Activated T-helper 2 cell treated with anti-CD3 and anti-CD28 coated beads, Interferon-gamma antibody, Interleukin-2, Interleukin-4, amounts not matched to agents 10 μg/mL and 5 μg/mL and 100 μg/mL, durations not matched to agents 14 hours and 24 hours and 36 hours (primary cell): ENCODE measurements at regions of chr2 and their contacts with region 1.

Region 1: DNA sequence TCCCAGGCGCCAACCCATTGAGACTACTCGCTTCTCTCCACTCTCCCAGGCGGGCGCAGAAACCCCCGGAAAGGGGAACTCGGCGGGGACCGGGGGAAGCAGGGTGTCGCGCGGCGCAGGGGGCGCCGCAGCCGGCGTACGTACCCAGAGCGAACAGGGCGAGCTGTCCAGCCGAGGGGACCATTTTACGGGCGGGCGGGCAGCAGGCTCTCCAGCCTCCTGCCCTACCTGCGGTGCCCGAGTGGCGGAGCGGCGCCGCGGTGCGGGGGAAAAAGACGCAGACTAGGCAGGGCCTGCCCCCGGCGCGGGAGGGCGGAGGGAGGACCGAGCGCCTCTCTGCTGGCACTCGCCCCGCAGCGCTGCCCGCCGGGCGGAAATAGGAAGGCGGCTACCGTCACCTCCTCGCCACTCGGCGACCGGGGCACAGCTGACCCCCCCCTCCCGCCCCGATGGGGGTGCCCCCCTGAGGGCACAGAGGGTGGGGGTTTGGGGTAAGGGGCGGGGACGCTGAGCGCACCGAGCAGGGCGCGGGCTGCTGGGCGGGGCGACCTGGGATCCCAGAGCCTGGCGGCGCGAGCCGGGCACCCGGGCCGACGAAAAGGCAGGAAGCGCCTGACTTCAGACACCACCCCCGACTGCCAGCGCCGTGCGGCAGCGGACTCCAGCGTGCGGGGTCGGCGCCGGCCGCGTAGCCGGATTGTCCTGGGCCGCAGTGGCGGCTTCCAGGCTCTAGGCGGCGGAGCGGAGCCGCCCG is at the start of gene TGFA:
- DNase-seq: peak; percentile 54
- H3K4me3 Mint-ChIP-seq: peak within 1 kb of the TSS; percentile 73
- H3K27ac Mint-ChIP-seq: no peak within 1 kb of the TSS
- H3K4me1 Mint-ChIP-seq: peaks cover 17% of the 10 kb centered on the region
- H3K27me3 Mint-ChIP-seq: peaks cover 60% of the 10 kb centered on the region
- total RNA-seq, gene TGFA: not detected in 2 replicates

Region 2: DNA sequence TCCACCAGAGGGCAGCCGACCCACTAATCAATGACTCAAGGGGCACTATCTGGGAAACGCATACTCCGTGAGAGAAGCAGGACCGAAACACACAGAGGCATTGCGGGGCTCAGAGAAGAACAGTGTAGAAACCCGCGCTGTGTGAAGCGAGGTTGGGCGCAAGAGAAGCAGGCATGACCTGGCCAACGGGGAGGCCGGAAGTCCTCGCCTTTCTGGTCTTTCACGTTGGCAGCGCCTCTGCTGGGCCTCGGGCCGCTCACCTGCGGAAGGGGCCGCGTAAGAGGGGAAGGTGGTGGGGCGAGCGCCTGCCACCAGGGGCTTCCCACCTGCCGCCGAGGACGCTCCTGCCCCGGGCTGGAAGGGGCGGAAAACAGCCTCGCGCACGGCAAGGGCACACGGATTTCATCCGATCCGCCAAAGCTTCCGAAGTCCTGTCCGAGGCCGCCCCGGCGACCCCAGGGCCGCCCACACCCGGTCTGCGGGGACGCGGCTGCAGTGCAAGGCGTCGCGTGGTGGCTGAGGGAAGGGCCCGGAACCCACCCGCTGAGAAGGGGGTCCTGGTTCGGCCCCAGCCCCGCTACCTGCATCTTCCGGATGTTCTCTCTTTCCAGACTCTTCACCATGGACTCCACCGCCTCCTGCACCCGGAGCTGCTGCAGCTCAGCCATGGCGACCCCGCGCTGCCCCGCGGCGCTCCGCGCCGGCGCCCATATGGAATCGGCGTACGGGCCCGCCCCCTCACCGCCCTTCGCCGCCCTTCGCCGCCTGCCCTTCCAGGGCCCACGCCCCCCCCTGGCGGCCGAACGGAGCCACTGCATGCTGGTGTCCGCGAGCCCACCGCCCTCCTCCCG is 252.2 kb before region 1 on chr2 and contains the start of gene FAM136A:
- intact Hi-C with region 1: loop called (anchors 2 kb)
- DNase-seq: peak; percentile 86
- H3K4me3 Mint-ChIP-seq: peak within 1 kb of the TSS; percentile 88
- H3K27ac Mint-ChIP-seq: peak within 1 kb of the TSS; percentile 90
- H3K4me1 Mint-ChIP-seq: peaks cover 31% of the 10 kb centered on the region
- H3K27me3 Mint-ChIP-seq: no peaks in the 10 kb centered on the region
- total RNA-seq, gene FAM136A: 71.3 and 71.8 TPM in 2 replicates

Region 3: GRCh38 chr2:70616168-70616694 is 62.5 kb after region 1 on chr2:
- intact Hi-C with region 1: loop called (anchors 1 kb)
- DNase-seq: no peak
- H3K4me3 Mint-ChIP-seq: no peak overlapping the region
- H3K27ac Mint-ChIP-seq: no peak overlapping the region
- H3K4me1 Mint-ChIP-seq: peaks cover 2% of the 10 kb centered on the region
- H3K27me3 Mint-ChIP-seq: peaks cover 14% of the 10 kb centered on the region

Region 4: DNA sequence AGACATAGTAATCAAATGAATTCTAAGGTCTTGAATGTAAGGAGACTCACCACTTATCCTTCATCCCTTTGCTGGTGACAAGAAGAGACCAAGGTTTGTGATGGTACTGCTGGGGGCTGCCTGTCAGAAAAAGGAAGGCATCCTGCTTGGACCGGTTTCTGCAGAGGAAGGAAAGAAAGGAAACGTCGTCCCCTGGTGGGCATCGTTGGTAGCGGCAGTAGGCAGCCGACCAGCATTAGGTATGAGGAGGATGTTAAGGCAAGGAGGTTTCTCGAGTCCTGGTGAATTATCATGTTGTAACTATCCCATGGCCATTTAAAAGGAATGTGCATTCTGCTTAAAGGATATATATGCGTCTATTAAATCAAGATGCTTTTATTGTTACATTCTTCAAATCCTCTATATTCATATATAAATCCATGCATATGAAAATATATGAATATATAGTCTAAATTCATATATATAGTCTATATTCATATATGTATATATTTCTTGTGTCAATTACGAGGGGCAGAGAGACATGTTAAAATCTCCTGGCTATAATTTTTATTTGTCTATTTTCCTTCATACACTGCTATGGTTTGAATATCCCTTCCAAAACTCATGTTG is 94.2 kb after region 1 on chr2:
- intact Hi-C with region 1: loop called (anchors 5 kb)
- DNase-seq: peak; percentile 55
- H3K4me3 Mint-ChIP-seq: no peak overlapping the region
- H3K27ac Mint-ChIP-seq: no peak overlapping the region
- H3K4me1 Mint-ChIP-seq: no peaks in the 10 kb centered on the region
- H3K27me3 Mint-ChIP-seq: peaks cover 22% of the 10 kb centered on the region

Region 5: GRCh38 chr2:70887550-70888246 is 333.9 kb after region 1 on chr2:
- intact Hi-C with region 1: loop called (anchors 5 kb)
- DNase-seq: no peak
- H3K4me3 Mint-ChIP-seq: peak overlapping the region; percentile 66
- H3K27ac Mint-ChIP-seq: no peak overlapping the region
- H3K4me1 Mint-ChIP-seq: peaks cover 20% of the 10 kb centered on the region
- H3K27me3 Mint-ChIP-seq: peaks cover 84% of the 10 kb centered on the region